Heart left ventricle (tissue), 16 donors: ENCODE measurements at regions of chr2 and their contacts with region 1.

Region 1: GRCh38 chr2:227460070-227460485 is 11.9 kb upstream of the AGFG1 start:
- DNase-seq: no peak
- ATAC-seq: no peak
- H3K4me3 ChIP-seq: no peak overlapping the region
- H3K27ac ChIP-seq: no peak overlapping the region
- H3K4me1 ChIP-seq: peaks cover 0 to 20% (median 0%) of the 10 kb centered on the region in 12 donors
- H3K27me3 ChIP-seq: no peaks in the 10 kb centered on the region
- CTCF ChIP-seq: no peak
- POLR2A ChIP-seq: no peak

Region 2: GRCh38 chr2:227395556-227395955 is 64.5 kb before region 1 on chr2:
- intact Hi-C with region 1: no loop called
- DNase-seq: no peak
- ATAC-seq: no peak
- H3K4me3 ChIP-seq: no peak overlapping the region
- H3K27ac ChIP-seq: no peak overlapping the region
- H3K4me1 ChIP-seq: peaks cover 0 to 11% (median 0%) of the 10 kb centered on the region in 12 donors
- H3K27me3 ChIP-seq: no peaks in the 10 kb centered on the region
- CTCF ChIP-seq: no peak
- POLR2A ChIP-seq: no peak

Region 3: GRCh38 chr2:227503433-227504406 is 43.6 kb after region 1 on chr2:
- intact Hi-C with region 1: no loop called
- DNase-seq: peak in 2 of 5 donors; percentile 29 to 47
- ATAC-seq: peak; percentile 49 to 84 (median 64)
- H3K4me3 ChIP-seq: no peak overlapping the region
- H3K27ac ChIP-seq: peak overlapping the region in 1 of 12 donors; percentile 42
- H3K4me1 ChIP-seq: peaks cover 0 to 79% (median 49%) of the 10 kb centered on the region in 12 donors
- H3K27me3 ChIP-seq: no peaks in the 10 kb centered on the region
- CTCF ChIP-seq: no peak
- POLR2A ChIP-seq: no peak

Region 4: DNA sequence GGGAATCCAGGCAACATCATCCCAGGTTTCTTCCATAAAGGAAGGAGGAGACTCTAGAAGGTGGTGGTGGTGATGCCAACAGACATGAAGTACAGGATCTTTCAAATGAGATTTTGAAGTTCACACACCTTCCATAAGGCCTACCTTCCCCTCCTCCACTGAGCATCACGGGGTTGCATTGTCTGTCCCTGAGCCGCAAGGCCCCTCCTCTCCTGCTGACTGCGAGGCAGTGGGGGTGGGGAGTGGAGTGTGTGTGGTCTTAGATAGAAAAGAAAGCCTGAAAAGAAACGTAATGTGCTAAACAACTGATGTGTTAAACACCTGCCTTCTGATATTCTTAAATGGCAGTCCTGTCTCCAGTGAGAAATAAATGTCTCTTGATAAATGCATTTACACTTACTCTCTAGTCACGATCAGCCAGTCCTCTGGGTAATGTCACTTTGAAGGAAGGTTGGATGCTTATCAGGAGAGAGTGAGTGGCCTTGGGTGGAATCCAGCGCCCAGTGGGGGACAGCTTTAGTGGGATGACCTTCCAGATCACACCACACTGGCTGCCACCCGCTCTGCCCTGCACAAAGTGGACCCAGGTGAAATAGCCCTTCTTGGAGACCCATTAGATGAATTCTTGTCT is 201.1 kb after region 1 on chr2:
- intact Hi-C with region 1: loop called in 2 of 10 experiments (anchors 10 kb)
- DNase-seq: peak in 1 of 5 donors; percentile 7
- ATAC-seq: peak in 1 of 4 donors; percentile 61
- H3K4me3 ChIP-seq: no peak overlapping the region
- H3K27ac ChIP-seq: no peak overlapping the region
- H3K4me1 ChIP-seq: peaks cover 0 to 7% (median 0%) of the 10 kb centered on the region in 12 donors
- H3K27me3 ChIP-seq: no peaks in the 10 kb centered on the region
- CTCF ChIP-seq: no peak
- POLR2A ChIP-seq: no peak